ENCODE measurements at regions of chr12 and their contacts with region 1.

Region 1: DNA sequence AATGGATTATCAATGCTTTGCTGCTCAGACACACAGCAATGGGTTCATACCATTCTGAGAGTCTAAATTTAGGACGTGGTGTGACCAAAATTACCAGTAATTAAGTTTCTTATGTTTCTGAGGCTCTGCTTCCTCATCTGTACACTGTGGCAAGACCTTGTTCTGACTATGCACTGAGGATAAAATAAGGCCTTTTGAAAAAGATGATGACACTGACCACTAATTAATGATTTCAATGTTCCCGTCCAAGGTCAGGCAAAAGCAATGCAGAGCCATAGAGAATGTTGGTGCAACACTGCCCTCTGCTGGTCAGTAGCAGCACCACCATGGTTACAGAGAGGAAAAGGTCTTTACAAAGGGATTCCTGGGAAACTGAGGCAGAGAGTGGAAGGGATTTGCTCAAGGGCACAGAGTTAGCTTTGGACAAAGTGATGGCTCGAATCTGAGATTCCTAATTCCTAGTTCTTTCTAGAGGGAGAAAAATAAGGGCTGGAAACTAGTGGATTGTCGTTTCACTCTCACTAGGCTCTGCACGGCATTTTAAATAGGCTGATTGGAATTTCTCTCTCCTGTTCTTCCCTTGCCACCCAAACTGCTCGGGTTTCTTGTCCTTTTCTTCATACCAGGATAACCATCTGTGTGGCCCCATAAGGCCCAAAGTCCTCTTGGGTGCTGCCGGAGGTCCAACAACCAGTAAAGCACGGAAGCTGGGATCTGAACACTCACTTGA is 22.3 kb upstream of the P2RX7 start:
- DNase-seq: peak; percentile 29 to 69 (median 50)
- ATAC-seq: peak; percentile 92
- H3K4me3 ChIP-seq: no peak overlapping the region
- H3K4me3 Mint-ChIP-seq: no peak overlapping the region
- H3K27ac ChIP-seq: no peak overlapping the region
- H3K27ac Mint-ChIP-seq: peak overlapping the region in 2 of 9 donors; percentile 1 to 32
- H3K4me1 ChIP-seq: no peaks in the 10 kb centered on the region
- H3K4me1 Mint-ChIP-seq: peaks cover 3 to 12% (median 5%) of the 10 kb centered on the region in 7 donors
- H3K27me3 ChIP-seq: no peaks in the 10 kb centered on the region
- H3K27me3 Mint-ChIP-seq: no peaks in the 10 kb centered on the region

Region 2: GRCh38 chr12:120356567-120357030 is 753.8 kb before region 1 on chr12:
- CTCF ChIA-PET with region 1: no interaction called
- POLR2A ChIA-PET with region 1: no interaction called
- intact Hi-C with region 1: loop called in 1 of 2 experiments (anchors 1 kb)
- DNase-seq: peak; percentile 47 to 78 (median 61)
- ATAC-seq: peak; percentile 88
- H3K4me3 ChIP-seq: no peak overlapping the region
- H3K4me3 Mint-ChIP-seq: no peak overlapping the region
- H3K27ac ChIP-seq: no peak overlapping the region
- H3K27ac Mint-ChIP-seq: no peak overlapping the region
- H3K4me1 ChIP-seq: no peaks in the 10 kb centered on the region
- H3K4me1 Mint-ChIP-seq: peaks cover 0 to 3% (median 0%) of the 10 kb centered on the region in 7 donors
- H3K27me3 ChIP-seq: no peaks in the 10 kb centered on the region
- H3K27me3 Mint-ChIP-seq: peaks cover 30 to 36% (median 31%) of the 10 kb centered on the region in 5 donors

Region 3: GRCh38 chr12:120649442-120650232 is 460.7 kb before region 1 on chr12:
- CTCF ChIA-PET with region 1: no interaction called
- POLR2A ChIA-PET with region 1: no interaction called
- intact Hi-C with region 1: loop called (anchors 1 to 2 kb)
- DNase-seq: no peak
- ATAC-seq: no peak
- H3K4me3 ChIP-seq: no peak overlapping the region
- H3K4me3 Mint-ChIP-seq: peak overlapping the region in 8 of 10 donors; percentile 31 to 78 (median 49)
- H3K27ac ChIP-seq: no peak overlapping the region
- H3K27ac Mint-ChIP-seq: no peak overlapping the region
- H3K4me1 ChIP-seq: peaks cover 6 to 7% of the 10 kb centered on the region in 2 donors
- H3K4me1 Mint-ChIP-seq: peaks cover 6 to 16% (median 13%) of the 10 kb centered on the region in 7 donors
- H3K27me3 ChIP-seq: peaks cover 3 to 5% of the 10 kb centered on the region in 2 donors
- H3K27me3 Mint-ChIP-seq: peaks cover 42 to 63% (median 58%) of the 10 kb centered on the region in 5 donors

Region 4: GRCh38 chr12:120944645-120945231 is 165.6 kb before region 1 on chr12:
- CTCF ChIA-PET with region 1: no interaction called
- POLR2A ChIA-PET with region 1: no interaction called
- intact Hi-C with region 1: loop called (anchors 1 to 2 kb)
- DNase-seq: peak; percentile 34 to 71 (median 50)
- ATAC-seq: peak; percentile 60
- H3K4me3 ChIP-seq: no peak overlapping the region
- H3K4me3 Mint-ChIP-seq: no peak overlapping the region
- H3K27ac ChIP-seq: no peak overlapping the region
- H3K27ac Mint-ChIP-seq: peak overlapping the region in 2 of 9 donors; percentile 1 to 30
- H3K4me1 ChIP-seq: no peaks in the 10 kb centered on the region
- H3K4me1 Mint-ChIP-seq: peaks cover 0 to 6% (median 2%) of the 10 kb centered on the region in 7 donors
- H3K27me3 ChIP-seq: no peaks in the 10 kb centered on the region
- H3K27me3 Mint-ChIP-seq: peaks cover 0 to 8% (median 0%) of the 10 kb centered on the region in 5 donors

Region 5: GRCh38 chr12:121005346-121005815 is 105.0 kb before region 1 on chr12:
- CTCF ChIA-PET with region 1: interaction called, 9 read pairs
- POLR2A ChIA-PET with region 1: no interaction called
- intact Hi-C with region 1: loop called (anchors 1 to 2 kb)
- DNase-seq: peak in 6 of 9 donors; percentile 17 to 49 (median 19)
- ATAC-seq: peak; percentile 54
- H3K4me3 ChIP-seq: no peak overlapping the region
- H3K4me3 Mint-ChIP-seq: no peak overlapping the region
- H3K27ac ChIP-seq: no peak overlapping the region
- H3K27ac Mint-ChIP-seq: peak overlapping the region in 3 of 9 donors; percentile 8 to 65 (median 30)
- H3K4me1 ChIP-seq: no peaks in the 10 kb centered on the region
- H3K4me1 Mint-ChIP-seq: peaks cover 0 to 5% (median 0%) of the 10 kb centered on the region in 7 donors
- H3K27me3 ChIP-seq: no peaks in the 10 kb centered on the region
- H3K27me3 Mint-ChIP-seq: no peaks in the 10 kb centered on the region

Region 6: DNA sequence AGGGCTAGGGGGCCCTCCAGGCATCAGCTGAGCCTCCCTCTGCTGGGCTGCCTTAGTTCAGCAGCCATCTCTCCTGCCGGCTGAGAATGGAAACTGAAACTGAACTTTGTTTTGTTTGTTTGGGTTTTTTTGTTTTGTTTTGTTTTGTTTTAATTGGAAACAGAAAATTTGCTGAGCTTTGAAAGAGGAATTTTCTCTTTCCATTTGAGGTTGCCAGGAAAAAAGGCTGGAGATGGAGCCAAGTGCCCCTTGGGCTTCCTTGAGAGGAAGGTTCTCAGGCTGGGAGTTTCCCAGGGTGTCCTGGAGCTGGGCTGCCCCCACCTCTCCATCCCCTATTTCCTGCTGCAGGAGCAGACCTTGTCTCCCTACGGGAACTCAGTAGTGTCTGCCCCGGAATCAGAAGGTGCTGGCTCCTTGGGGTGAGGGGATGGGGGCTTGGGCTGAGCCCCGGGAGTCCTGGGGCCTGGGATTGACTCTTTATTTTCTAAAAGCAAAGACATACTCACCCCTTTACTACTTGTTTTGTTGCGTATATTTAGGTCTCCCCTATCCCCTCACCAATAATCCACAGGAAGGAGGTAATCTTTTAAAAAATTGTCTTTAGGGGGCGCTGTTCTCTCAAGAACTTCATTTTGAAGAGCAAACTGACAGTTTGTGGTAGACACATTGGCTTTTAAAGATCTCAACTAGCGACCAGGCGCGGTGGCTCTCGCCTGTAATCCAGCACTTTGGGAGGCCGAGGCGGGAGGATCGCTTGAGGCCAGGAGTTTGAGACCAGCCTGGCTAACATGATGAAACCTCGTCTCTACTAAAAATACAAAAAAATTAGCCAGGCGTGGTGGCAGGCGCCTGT is 50.0 kb before region 1 on chr12:
- CTCF ChIA-PET with region 1: interaction called, 15 read pairs
- POLR2A ChIA-PET with region 1: interaction called, 5 read pairs
- intact Hi-C with region 1: loop called (anchors 1 kb)
- DNase-seq: peak; percentile 28 to 78 (median 67)
- ATAC-seq: peak; percentile 97
- H3K4me3 ChIP-seq: peak overlapping the region; percentile 74
- H3K4me3 Mint-ChIP-seq: peak overlapping the region; percentile 73 to 91 (median 85)
- H3K27ac ChIP-seq: peak overlapping the region; percentile 56
- H3K27ac Mint-ChIP-seq: peak overlapping the region; percentile 75 to 98 (median 91)
- H3K4me1 ChIP-seq: peaks cover 7 to 11% of the 10 kb centered on the region in 2 donors
- H3K4me1 Mint-ChIP-seq: peaks cover 9 to 31% (median 17%) of the 10 kb centered on the region in 7 donors
- H3K27me3 ChIP-seq: no peaks in the 10 kb centered on the region
- H3K27me3 Mint-ChIP-seq: no peaks in the 10 kb centered on the region

Region 7: DNA sequence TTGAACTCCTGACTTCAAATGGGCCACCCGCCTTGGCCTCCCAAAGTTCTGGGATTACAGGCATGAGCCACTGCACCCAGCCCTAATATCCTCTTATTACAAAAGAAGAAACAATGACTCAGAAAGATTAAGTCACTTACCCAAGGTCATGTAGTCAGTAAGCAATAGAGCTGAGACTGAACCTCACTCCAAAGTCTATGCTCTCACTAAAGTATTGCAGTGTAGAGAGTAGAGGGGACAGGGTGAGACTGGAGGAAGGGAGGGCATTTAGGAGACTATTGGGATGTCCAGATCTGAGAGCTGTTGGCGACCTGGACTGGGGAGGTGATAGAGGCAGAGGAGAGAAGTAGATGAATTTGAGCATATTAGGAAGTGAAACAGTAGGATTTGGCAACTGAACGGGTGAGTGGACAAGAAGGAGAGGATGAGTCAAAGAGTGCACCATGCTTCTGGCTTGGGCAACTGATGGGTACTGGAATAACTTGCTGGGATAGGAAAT is 34.1 kb after region 1 on chr12:
- CTCF ChIA-PET with region 1: no interaction called
- POLR2A ChIA-PET with region 1: no interaction called
- intact Hi-C with region 1: no loop called
- DNase-seq: peak in 1 of 9 donors; percentile 10
- ATAC-seq: peak; percentile 72
- H3K4me3 ChIP-seq: no peak overlapping the region
- H3K4me3 Mint-ChIP-seq: peak overlapping the region in 2 of 10 donors; percentile 47 to 60
- H3K27ac ChIP-seq: no peak overlapping the region
- H3K27ac Mint-ChIP-seq: peak overlapping the region in 6 of 9 donors; percentile 1 to 87 (median 30)
- H3K4me1 ChIP-seq: no peaks in the 10 kb centered on the region
- H3K4me1 Mint-ChIP-seq: peaks cover 14 to 30% (median 19%) of the 10 kb centered on the region in 7 donors
- H3K27me3 ChIP-seq: no peaks in the 10 kb centered on the region
- H3K27me3 Mint-ChIP-seq: no peaks in the 10 kb centered on the region

Region 8: DNA sequence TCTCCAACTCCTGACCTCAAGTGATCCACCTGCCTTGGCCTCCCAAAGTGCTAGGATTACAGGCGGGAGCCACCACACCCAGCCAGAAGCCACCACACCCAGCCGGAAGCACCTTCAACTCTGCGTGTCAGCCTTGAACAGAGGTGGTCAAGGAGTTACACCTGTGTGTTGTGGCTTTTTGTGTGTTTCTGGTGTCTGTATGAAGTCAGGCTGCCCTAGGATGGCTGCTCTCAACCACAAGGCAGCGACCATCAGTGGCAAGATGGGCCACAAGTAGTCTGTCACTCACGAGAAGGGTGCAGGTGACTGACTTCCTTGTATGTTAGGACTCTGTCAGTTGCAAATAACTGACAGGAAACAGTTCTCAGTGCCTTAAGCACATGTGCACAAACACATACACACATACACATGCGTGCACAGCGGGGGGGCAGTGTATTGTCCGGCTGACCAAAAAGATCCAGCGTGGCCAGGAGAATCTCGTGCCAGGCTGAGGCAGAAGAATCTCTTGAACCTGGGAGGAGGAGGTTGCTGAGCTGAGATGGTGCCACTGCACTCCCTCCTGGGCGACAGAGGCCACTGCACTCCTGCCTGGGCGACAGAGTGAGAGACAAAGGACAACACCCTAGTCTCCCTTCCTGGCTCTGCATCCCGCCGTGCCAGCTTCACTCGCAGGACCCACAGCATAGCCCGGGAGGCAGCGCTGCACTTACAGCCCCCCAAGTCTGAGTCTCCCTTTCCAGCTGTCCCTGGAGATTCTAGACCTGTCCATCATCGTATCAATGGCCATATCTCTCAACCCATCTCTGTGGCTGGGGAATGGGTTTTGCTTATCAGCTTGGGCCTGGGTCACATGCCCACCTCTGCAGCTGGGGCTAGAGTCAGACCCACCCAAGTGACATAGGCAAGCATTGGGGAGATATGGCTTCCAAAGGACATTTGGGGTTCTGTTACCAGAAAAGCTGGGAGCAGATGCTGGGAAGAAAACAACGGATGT is 113.2 kb after region 1 on chr12:
- CTCF ChIA-PET with region 1: no interaction called
- POLR2A ChIA-PET with region 1: no interaction called
- intact Hi-C with region 1: loop called in 1 of 2 experiments (anchors 1 kb)
- DNase-seq: peak in 8 of 9 donors; percentile 21 to 56 (median 48)
- ATAC-seq: peak; percentile 68
- H3K4me3 ChIP-seq: peak overlapping the region; percentile 28
- H3K4me3 Mint-ChIP-seq: peak overlapping the region; percentile 48 to 91 (median 72)
- H3K27ac ChIP-seq: peak overlapping the region; percentile 56
- H3K27ac Mint-ChIP-seq: peak overlapping the region; percentile 92 to 98 (median 95)
- H3K4me1 ChIP-seq: peaks cover 16 to 48% of the 10 kb centered on the region in 2 donors
- H3K4me1 Mint-ChIP-seq: peaks cover 23 to 57% (median 49%) of the 10 kb centered on the region in 7 donors
- H3K27me3 ChIP-seq: no peaks in the 10 kb centered on the region
- H3K27me3 Mint-ChIP-seq: no peaks in the 10 kb centered on the region

Measured in naive thymus-derived CD4-positive, alpha-beta T cell (primary cell).